ENCODE measurements at regions of chr2 and their contacts with region 1.

Region 1: DNA sequence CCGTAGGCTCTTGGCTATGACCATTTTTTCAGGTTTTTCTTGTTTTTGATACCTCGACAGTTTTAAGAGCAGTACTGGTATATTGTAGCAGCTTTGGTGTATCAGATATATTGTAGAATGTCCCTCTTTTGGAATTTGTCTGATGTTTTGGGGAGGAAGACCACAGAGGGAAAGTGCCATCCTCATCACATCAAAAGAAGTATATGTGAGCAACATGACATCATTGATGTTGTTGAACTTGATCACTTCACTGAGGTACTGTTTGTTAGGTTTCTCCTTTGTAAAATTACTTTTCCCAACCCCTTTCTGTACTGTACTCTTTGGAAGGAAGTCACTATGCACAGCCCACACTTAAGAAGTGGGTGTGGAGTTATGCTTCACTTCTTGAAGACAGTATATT is 41.0 kb downstream of the EML4 start:
- DNase-seq: no peak
- H3K4me3 ChIP-seq: no peak overlapping the region
- H3K4me3 Mint-ChIP-seq: peak overlapping the region in 5 of 8 donors; percentile 53 to 75 (median 64)
- H3K27ac ChIP-seq: no peak overlapping the region
- H3K27ac Mint-ChIP-seq: peak overlapping the region in 4 of 7 donors; percentile 16 to 88 (median 60)
- H3K4me1 ChIP-seq: peaks cover 82% of the 10 kb centered on the region
- H3K4me1 Mint-ChIP-seq: peaks cover 48 to 83% (median 65%) of the 10 kb centered on the region in 4 donors
- H3K27me3 ChIP-seq: no peaks in the 10 kb centered on the region
- H3K27me3 Mint-ChIP-seq: no peaks in the 10 kb centered on the region

Region 2: GRCh38 chr2:41061356-41061755 is 1148.8 kb before region 1 on chr2:
- CTCF ChIA-PET with region 1: no interaction called
- POLR2A ChIA-PET with region 1: no interaction called
- intact Hi-C with region 1: no loop called
- DNase-seq: no peak
- H3K4me3 ChIP-seq: no peak overlapping the region
- H3K4me3 Mint-ChIP-seq: no peak overlapping the region
- H3K27ac ChIP-seq: no peak overlapping the region
- H3K27ac Mint-ChIP-seq: no peak overlapping the region
- H3K4me1 ChIP-seq: no peaks in the 10 kb centered on the region
- H3K4me1 Mint-ChIP-seq: no peaks in the 10 kb centered on the region
- H3K27me3 ChIP-seq: no peaks in the 10 kb centered on the region
- H3K27me3 Mint-ChIP-seq: no peaks in the 10 kb centered on the region

Region 3: GRCh38 chr2:42223855-42224268 is 13.7 kb after region 1 on chr2:
- CTCF ChIA-PET with region 1: interaction called, 4 read pairs
- POLR2A ChIA-PET with region 1: interaction called, 5 read pairs
- intact Hi-C with region 1: loop called (anchors 2 kb)
- DNase-seq: no peak
- H3K4me3 ChIP-seq: no peak overlapping the region
- H3K4me3 Mint-ChIP-seq: peak overlapping the region in 3 of 8 donors; percentile 27 to 67 (median 45)
- H3K27ac ChIP-seq: no peak overlapping the region
- H3K27ac Mint-ChIP-seq: peak overlapping the region in 4 of 7 donors; percentile 14 to 44 (median 20)
- H3K4me1 ChIP-seq: peaks cover 92% of the 10 kb centered on the region
- H3K4me1 Mint-ChIP-seq: peaks cover 55 to 95% (median 76%) of the 10 kb centered on the region in 4 donors
- H3K27me3 ChIP-seq: no peaks in the 10 kb centered on the region
- H3K27me3 Mint-ChIP-seq: no peaks in the 10 kb centered on the region

Region 4: GRCh38 chr2:42244520-42244919 is 34.3 kb after region 1 on chr2:
- CTCF ChIA-PET with region 1: interaction called, 3 read pairs
- POLR2A ChIA-PET with region 1: interaction called, 4 read pairs
- intact Hi-C with region 1: loop called (anchors 5 kb)
- DNase-seq: no peak
- H3K4me3 ChIP-seq: no peak overlapping the region
- H3K4me3 Mint-ChIP-seq: peak overlapping the region in 4 of 8 donors; percentile 0 to 55 (median 22)
- H3K27ac ChIP-seq: no peak overlapping the region
- H3K27ac Mint-ChIP-seq: peak overlapping the region in 6 of 7 donors; percentile 17 to 67 (median 37)
- H3K4me1 ChIP-seq: peaks cover 53% of the 10 kb centered on the region
- H3K4me1 Mint-ChIP-seq: peaks cover 50 to 71% (median 66%) of the 10 kb centered on the region in 4 donors
- H3K27me3 ChIP-seq: no peaks in the 10 kb centered on the region
- H3K27me3 Mint-ChIP-seq: no peaks in the 10 kb centered on the region